ENCODE measurements at regions of chr1 and their contacts with region 1.

Region 1: GRCh38 chr1:117059678-117060440 is at the start of gene TTF2:
- DNase-seq: peak; percentile 94
- ATAC-seq: peak; percentile 100
- H3K4me3 ChIP-seq: peak within 1 kb of the TSS; percentile 77 to 97 (median 84)
- H3K27ac ChIP-seq: peak within 1 kb of the TSS; percentile 59 to 83 (median 74)
- H3K4me1 ChIP-seq: peaks cover 0 to 8% of the 10 kb centered on the region in 2 donors
- H3K27me3 ChIP-seq: no peaks in the 10 kb centered on the region
- CTCF ChIP-seq: peak in 3 of 5 experiments; percentile 8 to 43 (median 37)
- POLR2A ChIP-seq: peak in 1 of 2 donors; percentile 34
- total RNA-seq, gene TTF2: 9.7 to 15.2 (median 12.2) TPM

Region 2: DNA sequence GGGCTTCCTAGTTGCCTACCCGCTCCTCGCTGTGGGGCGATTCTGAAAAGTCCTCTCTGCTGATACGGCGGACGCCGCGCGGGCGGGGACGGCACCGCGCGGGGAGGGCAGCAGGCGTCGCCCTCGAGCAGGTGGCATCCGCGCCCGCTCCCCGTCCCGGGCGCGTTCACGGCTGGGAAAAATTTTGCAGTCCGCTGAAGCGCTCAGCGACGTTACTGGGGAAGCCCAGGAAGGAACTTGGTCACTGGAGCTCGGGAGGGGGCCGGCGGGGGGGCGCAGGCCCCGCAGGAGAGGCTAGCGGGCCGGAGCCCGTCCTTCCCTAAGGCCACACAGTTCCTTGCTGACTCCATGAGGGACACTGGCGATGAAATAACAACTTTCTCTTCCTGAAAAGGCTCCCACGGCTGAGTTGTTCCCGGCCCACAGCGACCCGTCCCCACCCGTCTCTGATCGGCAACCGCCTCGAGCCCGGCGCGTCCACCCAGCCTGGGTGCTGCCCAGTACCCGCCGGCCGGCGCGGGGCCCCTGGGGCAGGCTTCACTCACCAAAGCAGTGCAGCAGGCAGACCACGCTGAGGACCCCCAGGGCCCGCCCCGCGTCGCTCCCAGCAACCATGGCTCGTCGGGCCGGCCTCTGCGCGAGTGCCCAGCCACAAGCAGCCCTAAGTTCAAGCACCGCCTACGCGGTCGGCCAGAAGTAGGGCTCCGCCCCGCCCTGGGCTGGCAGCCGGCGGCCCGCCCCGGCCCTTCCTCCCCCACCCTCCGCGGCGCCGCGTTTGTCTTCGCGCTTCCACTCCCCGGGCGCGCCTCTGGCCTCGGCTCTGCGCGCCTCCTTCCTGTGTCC is 489.3 kb before region 1 on chr1 and contains the start of gene CD58:
- in situ Hi-C with region 1: loop called in 2 of 4 experiments (anchors 10 kb)
- intact Hi-C with region 1: loop called (anchors 5 kb)
- DNase-seq: peak; percentile 70 to 78
- ATAC-seq: peak; percentile 89 to 91
- H3K4me3 ChIP-seq: peak within 1 kb of the TSS; percentile 61 to 86 (median 80)
- H3K27ac ChIP-seq: peak within 1 kb of the TSS; percentile 85 to 97 (median 92)
- H3K4me1 ChIP-seq: peaks cover 11 to 18% of the 10 kb centered on the region in 2 donors
- H3K27me3 ChIP-seq: no peaks in the 10 kb centered on the region
- CTCF ChIP-seq: peak; percentile 60 to 67 (median 62)
- POLR2A ChIP-seq: peak; percentile 73 to 82
- total RNA-seq, gene CD58: 4.1 to 15.9 (median 10.2) TPM

Region 3: DNA sequence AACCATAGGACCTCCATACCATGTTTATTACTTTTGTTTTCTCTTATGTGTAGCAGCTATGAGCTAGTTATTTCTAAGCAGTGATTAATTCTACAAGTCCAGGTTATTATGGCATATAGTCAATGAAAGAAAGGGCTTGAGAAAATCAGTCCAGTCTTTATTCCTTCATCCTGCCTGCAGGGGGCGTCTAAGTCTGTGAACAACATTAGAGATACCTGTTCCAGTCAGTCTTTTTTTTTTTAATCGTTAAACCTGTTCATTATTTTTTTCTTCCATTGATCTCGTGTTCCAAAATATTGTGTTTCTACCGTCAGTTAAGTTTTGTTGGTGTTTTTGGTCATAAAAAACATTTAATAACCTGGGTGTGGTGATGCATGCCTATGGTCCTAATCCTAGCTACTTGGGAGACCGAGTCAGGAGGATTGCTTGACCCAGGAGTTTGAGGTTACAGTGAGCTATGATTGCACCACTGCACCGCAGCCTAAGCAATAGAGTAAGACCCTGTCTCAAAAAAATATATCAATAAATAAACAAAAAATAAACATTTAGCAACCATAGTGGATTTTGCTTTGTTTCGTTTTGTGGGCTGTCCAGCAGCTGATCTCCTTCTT is 335.0 kb before region 1 on chr1:
- in situ Hi-C with region 1: loop called in 2 of 4 experiments (anchors 10 kb)
- intact Hi-C with region 1: loop called (anchors 1 kb)
- DNase-seq: no peak
- ATAC-seq: no peak
- H3K4me3 ChIP-seq: no peak overlapping the region
- H3K27ac ChIP-seq: no peak overlapping the region
- H3K4me1 ChIP-seq: no peaks in the 10 kb centered on the region
- H3K27me3 ChIP-seq: no peaks in the 10 kb centered on the region
- CTCF ChIP-seq: peak in 4 of 5 experiments; percentile 19 to 63 (median 33)
- POLR2A ChIP-seq: no peak

Region 4: GRCh38 chr1:116847688-116848531 is 211.9 kb before region 1 on chr1:
- in situ Hi-C with region 1: loop called in 1 of 4 experiments (anchors 10 kb)
- intact Hi-C with region 1: no loop called
- DNase-seq: peak in 1 of 2 donors; percentile 21
- ATAC-seq: peak in 1 of 2 donors; percentile 45
- H3K4me3 ChIP-seq: no peak overlapping the region
- H3K27ac ChIP-seq: no peak overlapping the region
- H3K4me1 ChIP-seq: no peaks in the 10 kb centered on the region
- H3K27me3 ChIP-seq: no peaks in the 10 kb centered on the region
- CTCF ChIP-seq: no peak
- POLR2A ChIP-seq: no peak

Region 5: DNA sequence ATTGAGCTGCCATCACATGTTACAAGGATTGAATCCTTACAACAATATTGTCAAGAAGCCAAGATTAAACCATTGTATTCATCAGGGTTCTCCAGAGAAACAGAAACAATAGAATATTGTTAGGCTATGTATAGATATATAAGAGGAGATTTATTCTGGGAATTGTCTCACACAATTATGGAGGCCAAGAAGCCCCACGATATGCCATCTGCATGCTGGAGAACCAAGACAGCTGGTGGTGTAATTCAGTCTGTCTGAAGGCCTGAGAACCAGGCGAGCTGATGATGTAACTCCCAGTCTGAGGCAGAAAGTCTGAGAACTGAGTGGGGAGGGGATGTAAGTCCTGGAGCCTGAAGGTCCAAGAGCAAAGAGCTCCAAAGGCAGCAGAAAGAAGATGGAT is 14.2 kb before region 1 on chr1:
- in situ Hi-C with region 1: no loop called
- intact Hi-C with region 1: no loop called
- DNase-seq: no peak
- ATAC-seq: no peak
- H3K4me3 ChIP-seq: no peak overlapping the region
- H3K27ac ChIP-seq: no peak overlapping the region
- H3K4me1 ChIP-seq: no peaks in the 10 kb centered on the region
- H3K27me3 ChIP-seq: no peaks in the 10 kb centered on the region
- CTCF ChIP-seq: no peak
- POLR2A ChIP-seq: no peak

Region 6: DNA sequence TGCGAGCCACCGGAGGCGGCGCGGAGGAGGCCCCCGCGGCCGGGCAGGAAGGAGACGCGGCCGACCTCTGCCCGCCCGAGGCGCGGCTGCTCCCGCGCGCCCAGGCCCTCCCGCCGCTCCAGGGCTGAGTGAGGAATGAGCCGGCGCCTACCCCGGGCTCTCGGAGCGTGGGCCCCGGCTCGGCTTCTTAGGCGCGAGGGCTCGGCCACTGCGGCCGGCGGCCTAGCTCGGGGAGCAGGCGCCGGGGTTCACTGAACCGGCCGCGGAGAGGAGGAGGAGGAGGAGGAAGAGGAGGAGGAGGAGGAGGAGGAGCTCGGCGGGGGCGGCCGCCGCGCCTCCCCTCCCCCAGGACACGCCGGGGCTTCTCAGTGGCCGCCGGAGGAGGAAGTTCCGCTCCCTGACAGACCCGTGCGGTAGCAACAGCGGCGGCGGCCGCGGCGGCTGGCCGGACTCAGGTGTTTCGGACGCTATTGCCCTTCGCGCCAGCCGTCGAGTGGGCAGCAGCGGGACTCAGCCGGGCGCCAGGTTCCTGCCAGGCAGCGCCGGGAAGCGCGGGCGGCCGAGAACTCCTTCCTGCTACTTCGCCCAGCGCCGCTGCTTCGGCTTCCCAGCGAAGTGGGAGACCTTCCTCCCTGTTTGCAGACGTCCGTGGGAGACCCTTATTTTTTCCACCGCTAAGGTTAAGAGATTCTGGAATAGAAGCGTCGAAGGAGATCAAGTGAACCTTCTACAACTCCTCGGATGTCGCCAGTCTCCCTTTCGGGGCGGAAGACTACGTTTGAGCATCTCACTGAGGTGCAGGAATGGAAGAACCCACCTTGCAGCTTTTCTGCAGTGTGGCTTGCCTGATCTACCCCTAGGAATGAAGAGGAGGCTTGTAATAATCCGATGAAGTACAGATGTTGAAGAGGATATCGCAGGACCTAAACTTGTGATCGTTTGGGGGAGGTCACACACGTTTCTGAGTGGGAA is 307.5 kb after region 1 on chr1 and contains the start of gene MAN1A2:
- in situ Hi-C with region 1: no loop called
- intact Hi-C with region 1: loop called (anchors 5 kb)
- DNase-seq: peak; percentile 91 to 92
- ATAC-seq: peak; percentile 75 to 86
- H3K4me3 ChIP-seq: peak within 1 kb of the TSS; percentile 67 to 94 (median 88)
- H3K27ac ChIP-seq: peak within 1 kb of the TSS; percentile 92 to 97 (median 96)
- H3K4me1 ChIP-seq: peaks cover 37 to 43% of the 10 kb centered on the region in 2 donors
- H3K27me3 ChIP-seq: no peaks in the 10 kb centered on the region
- CTCF ChIP-seq: peak in 1 of 5 experiments; percentile 17
- POLR2A ChIP-seq: peak; percentile 90 to 95
- total RNA-seq, gene MAN1A2: 14.9 to 37.0 (median 28.3) TPM

Measured in gastrocnemius medialis (tissue), 4 donors.